Calu3 (cell line): ENCODE measurements at regions of chr12 and their contacts with region 1.

Region 1: DNA sequence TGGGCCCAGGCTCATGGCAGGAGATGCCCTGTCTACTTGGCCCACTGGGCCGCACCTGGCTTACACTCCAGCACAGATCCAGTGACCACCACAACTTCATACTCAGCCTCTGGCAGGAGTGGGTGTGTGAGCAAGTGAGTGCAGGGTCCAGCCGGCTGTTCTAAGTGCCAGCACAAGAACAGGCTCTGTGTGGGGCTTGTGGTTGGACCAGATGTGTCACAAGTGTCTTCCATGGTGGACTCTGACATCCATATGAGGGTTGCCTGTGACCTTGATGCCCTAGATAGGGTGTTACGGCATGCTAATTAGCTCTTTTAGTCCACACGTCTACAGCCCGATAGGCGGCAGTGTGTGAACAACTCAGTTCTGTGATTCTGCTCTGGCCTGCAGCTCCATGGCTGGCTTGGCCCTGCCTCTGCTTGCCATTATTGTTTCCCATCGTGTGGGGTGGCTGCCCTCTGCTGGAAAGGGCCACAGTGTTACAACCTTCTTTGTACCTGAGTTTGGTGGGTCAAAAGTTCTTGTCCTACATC is 1089.1 kb downstream of the SLC6A15 start:
- DNase-seq: peak; percentile 66
- H3K4me3 Mint-ChIP-seq: no peak overlapping the region
- H3K27ac Mint-ChIP-seq: no peak overlapping the region
- H3K4me1 Mint-ChIP-seq: peaks cover 28% of the 10 kb centered on the region
- H3K27me3 Mint-ChIP-seq: no peaks in the 10 kb centered on the region
- CTCF ChIP-seq: no peak

Region 2: DNA sequence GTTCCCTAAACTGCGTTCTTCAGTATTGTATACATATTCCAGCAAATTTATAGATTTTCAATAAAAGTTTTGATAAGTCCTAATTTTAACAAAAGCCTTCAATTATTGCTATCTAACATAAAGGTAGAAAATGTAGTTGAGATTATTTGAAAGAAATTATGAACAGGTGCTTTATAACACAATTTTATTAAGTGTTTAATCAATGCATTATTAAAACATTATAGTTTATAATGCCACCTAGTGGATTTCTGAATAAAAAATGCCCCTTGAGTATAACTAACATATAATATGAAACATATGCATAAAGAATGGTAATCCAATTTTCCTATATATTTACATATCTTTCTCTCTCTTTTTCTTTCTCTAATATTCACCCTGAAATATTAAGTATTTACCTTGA is 573.8 kb after region 1 on chr12:
- CTCF ChIA-PET with region 1: no interaction called
- intact Hi-C with region 1: loop called (anchors 2 kb)
- DNase-seq: no peak
- H3K4me3 Mint-ChIP-seq: no peak overlapping the region
- H3K27ac Mint-ChIP-seq: no peak overlapping the region
- H3K4me1 Mint-ChIP-seq: no peaks in the 10 kb centered on the region
- H3K27me3 Mint-ChIP-seq: no peaks in the 10 kb centered on the region
- CTCF ChIP-seq: peak; percentile 22

Region 3: GRCh38 chr12:84502907-84503787 is 679.6 kb after region 1 on chr12:
- CTCF ChIA-PET with region 1: no interaction called
- intact Hi-C with region 1: loop called (anchors 5 kb)
- DNase-seq: peak; percentile 63
- H3K4me3 Mint-ChIP-seq: no peak overlapping the region
- H3K27ac Mint-ChIP-seq: no peak overlapping the region
- H3K4me1 Mint-ChIP-seq: peaks cover 21% of the 10 kb centered on the region
- H3K27me3 Mint-ChIP-seq: no peaks in the 10 kb centered on the region
- CTCF ChIP-seq: peak; percentile 62